CD4-positive, alpha-beta T cell (primary cell): ENCODE measurements at regions of chr11 and their contacts with region 1.

Region 1: DNA sequence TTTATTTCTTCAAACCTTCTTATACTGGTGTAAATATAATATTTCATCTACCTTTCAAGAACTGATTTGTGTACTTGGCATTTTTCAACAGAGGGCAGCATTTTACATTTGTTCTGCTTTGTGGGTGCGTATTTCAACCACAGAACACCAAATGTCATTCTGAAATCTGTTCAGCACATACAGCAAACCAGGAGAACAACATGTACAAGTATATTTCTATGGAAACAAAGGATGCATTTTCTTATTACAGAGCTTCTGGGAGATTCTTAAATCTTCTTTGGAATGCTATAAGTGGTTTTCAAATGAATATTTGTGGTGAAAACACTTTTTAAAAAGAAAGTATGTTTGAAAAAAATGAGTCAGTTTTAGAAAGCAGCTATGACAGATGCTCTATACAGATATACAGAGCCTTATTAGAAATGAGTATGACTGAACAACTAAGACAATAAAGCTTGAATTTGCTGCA is 946.0 kb downstream of the FAM181B start:
- DNase-seq: peak in 4 of 14 experiments; percentile 5 to 63 (median 60)
- ATAC-seq: peak; percentile 65
- H3K4me3 ChIP-seq: no peak overlapping the region
- H3K4me3 Mint-ChIP-seq: no peak overlapping the region
- H3K27ac ChIP-seq: no peak overlapping the region
- H3K27ac Mint-ChIP-seq: no peak overlapping the region
- H3K4me1 ChIP-seq: no peaks in the 10 kb centered on the region
- H3K4me1 Mint-ChIP-seq: peaks cover 9% of the 10 kb centered on the region
- H3K27me3 ChIP-seq: no peaks in the 10 kb centered on the region
- H3K27me3 Mint-ChIP-seq: no peaks in the 10 kb centered on the region
- CTCF ChIP-seq: peak; percentile 57

Region 2: GRCh38 chr11:81644239-81644840 is 143.3 kb before region 1 on chr11:
- CTCF ChIA-PET with region 1: no interaction called
- POLR2A ChIA-PET with region 1: no interaction called
- intact Hi-C with region 1: loop called in 1 of 2 experiments (anchors 5 kb)
- DNase-seq: peak in 3 of 14 experiments; percentile 43 to 48 (median 46)
- ATAC-seq: peak; percentile 66
- H3K4me3 ChIP-seq: no peak overlapping the region
- H3K4me3 Mint-ChIP-seq: no peak overlapping the region
- H3K27ac ChIP-seq: no peak overlapping the region
- H3K27ac Mint-ChIP-seq: no peak overlapping the region
- H3K4me1 ChIP-seq: no peaks in the 10 kb centered on the region
- H3K4me1 Mint-ChIP-seq: no peaks in the 10 kb centered on the region
- H3K27me3 ChIP-seq: peaks cover 0 to 3% of the 10 kb centered on the region in 2 experiments
- H3K27me3 Mint-ChIP-seq: peaks cover 21% of the 10 kb centered on the region
- CTCF ChIP-seq: peak; percentile 80

Region 3: DNA sequence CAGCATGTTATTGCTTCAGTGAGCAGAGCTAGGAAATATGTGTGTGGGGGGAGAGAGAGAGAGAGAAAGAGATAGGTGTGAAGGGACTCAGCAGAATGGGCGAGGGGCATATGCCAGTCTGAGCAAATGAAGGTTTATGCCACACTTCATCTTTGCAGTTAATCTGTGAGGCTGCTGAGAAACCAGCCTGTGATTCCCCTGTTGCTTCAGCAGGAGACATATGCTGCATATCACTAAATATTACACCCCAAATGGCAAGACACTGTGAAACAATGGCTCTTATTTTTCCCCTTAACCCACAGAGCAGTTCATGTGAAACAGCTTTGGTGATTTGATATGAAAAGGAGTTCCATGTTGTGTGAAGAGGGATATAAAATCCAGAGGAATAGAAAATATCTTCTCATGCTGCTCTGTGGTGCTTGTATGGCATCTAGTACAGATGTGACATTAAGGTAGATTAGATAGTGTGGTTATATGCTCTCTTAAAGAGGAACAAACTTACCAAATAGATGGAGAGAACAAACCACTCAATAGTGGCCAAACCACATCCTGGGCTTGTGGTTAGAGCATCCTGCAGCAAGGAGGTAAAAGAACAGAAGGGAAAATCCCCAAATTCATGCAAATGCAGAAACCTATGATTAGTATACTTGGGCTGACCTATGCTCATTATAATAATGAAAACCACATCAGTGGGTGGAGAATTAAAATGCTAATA is 81.9 kb after region 1 on chr11:
- CTCF ChIA-PET with region 1: no interaction called
- POLR2A ChIA-PET with region 1: no interaction called
- intact Hi-C with region 1: loop called in 1 of 2 experiments (anchors 5 kb)
- DNase-seq: peak; percentile 46 to 96 (median 66)
- ATAC-seq: peak; percentile 84
- H3K4me3 ChIP-seq: peak overlapping the region; percentile 40
- H3K4me3 Mint-ChIP-seq: peak overlapping the region; percentile 73
- H3K27ac ChIP-seq: peak overlapping the region; percentile 23 to 64
- H3K27ac Mint-ChIP-seq: peak overlapping the region; percentile 95
- H3K4me1 ChIP-seq: peaks cover 14% of the 10 kb centered on the region
- H3K4me1 Mint-ChIP-seq: peaks cover 53% of the 10 kb centered on the region
- H3K27me3 ChIP-seq: no peaks in the 10 kb centered on the region
- H3K27me3 Mint-ChIP-seq: no peaks in the 10 kb centered on the region
- CTCF ChIP-seq: no peak

Region 4: GRCh38 chr11:81963018-81963417 is 175.4 kb after region 1 on chr11:
- CTCF ChIA-PET with region 1: no interaction called
- POLR2A ChIA-PET with region 1: no interaction called
- intact Hi-C with region 1: loop called (anchors 5 kb)
- DNase-seq: peak in 3 of 14 experiments; percentile 23 to 37 (median 23)
- ATAC-seq: no peak
- H3K4me3 ChIP-seq: no peak overlapping the region
- H3K4me3 Mint-ChIP-seq: no peak overlapping the region
- H3K27ac ChIP-seq: no peak overlapping the region
- H3K27ac Mint-ChIP-seq: no peak overlapping the region
- H3K4me1 ChIP-seq: no peaks in the 10 kb centered on the region
- H3K4me1 Mint-ChIP-seq: peaks cover 17% of the 10 kb centered on the region
- H3K27me3 ChIP-seq: no peaks in the 10 kb centered on the region
- H3K27me3 Mint-ChIP-seq: no peaks in the 10 kb centered on the region
- CTCF ChIP-seq: peak; percentile 51

Region 5: DNA sequence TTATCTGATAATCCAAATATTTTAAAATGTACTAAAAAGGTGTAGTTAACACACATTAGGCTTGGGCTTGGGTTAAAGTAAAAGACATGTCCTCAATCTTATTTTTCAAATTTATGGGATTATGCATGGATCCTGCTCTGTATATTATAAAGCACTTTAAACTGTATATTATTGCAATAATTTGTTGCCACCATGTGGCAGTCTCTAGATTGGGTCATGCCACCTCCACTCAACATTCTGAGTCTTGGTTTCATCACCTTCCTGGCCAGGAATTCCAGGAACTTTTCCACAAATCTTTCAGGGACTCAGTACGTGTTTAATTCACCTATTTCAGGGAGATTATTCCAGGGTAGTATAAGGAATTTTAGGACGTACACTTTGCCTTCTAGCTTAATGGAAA is 250.5 kb after region 1 on chr11:
- CTCF ChIA-PET with region 1: no interaction called
- POLR2A ChIA-PET with region 1: no interaction called
- intact Hi-C with region 1: loop called in 1 of 2 experiments (anchors 5 kb)
- DNase-seq: no peak
- ATAC-seq: no peak
- H3K4me3 ChIP-seq: no peak overlapping the region
- H3K4me3 Mint-ChIP-seq: no peak overlapping the region
- H3K27ac ChIP-seq: no peak overlapping the region
- H3K27ac Mint-ChIP-seq: no peak overlapping the region
- H3K4me1 ChIP-seq: no peaks in the 10 kb centered on the region
- H3K4me1 Mint-ChIP-seq: no peaks in the 10 kb centered on the region
- H3K27me3 ChIP-seq: no peaks in the 10 kb centered on the region
- H3K27me3 Mint-ChIP-seq: no peaks in the 10 kb centered on the region
- CTCF ChIP-seq: no peak

Region 6: DNA sequence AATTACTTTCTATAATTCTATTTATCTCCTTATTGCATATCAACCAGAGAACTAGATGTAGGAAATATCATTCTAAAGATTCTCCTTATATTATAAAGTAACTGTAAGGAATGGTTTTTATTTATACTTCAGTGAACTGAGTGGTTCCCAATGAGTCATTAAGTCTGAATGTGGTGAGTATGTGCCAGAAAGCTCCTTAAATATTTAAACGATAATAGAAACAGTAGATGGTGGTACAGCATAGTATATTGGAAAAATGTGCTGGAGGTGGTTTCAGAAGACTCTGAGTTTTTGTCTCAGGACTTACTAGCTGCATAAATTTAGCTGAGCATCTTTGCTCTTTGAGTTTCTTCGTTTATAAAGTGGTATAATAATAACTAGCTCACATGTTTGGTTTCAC is 292.5 kb after region 1 on chr11:
- CTCF ChIA-PET with region 1: no interaction called
- POLR2A ChIA-PET with region 1: no interaction called
- intact Hi-C with region 1: no loop called
- DNase-seq: no peak
- ATAC-seq: no peak
- H3K4me3 ChIP-seq: no peak overlapping the region
- H3K4me3 Mint-ChIP-seq: no peak overlapping the region
- H3K27ac ChIP-seq: no peak overlapping the region
- H3K27ac Mint-ChIP-seq: no peak overlapping the region
- H3K4me1 ChIP-seq: no peaks in the 10 kb centered on the region
- H3K4me1 Mint-ChIP-seq: no peaks in the 10 kb centered on the region
- H3K27me3 ChIP-seq: no peaks in the 10 kb centered on the region
- H3K27me3 Mint-ChIP-seq: peaks cover 4% of the 10 kb centered on the region
- CTCF ChIP-seq: no peak

Region 7: GRCh38 chr11:82229341-82229740 is 441.7 kb after region 1 on chr11:
- CTCF ChIA-PET with region 1: no interaction called
- POLR2A ChIA-PET with region 1: no interaction called
- intact Hi-C with region 1: loop called (anchors 1 to 5 kb)
- DNase-seq: peak in 3 of 14 experiments; percentile 25 to 38 (median 28)
- ATAC-seq: no peak
- H3K4me3 ChIP-seq: no peak overlapping the region
- H3K4me3 Mint-ChIP-seq: no peak overlapping the region
- H3K27ac ChIP-seq: no peak overlapping the region
- H3K27ac Mint-ChIP-seq: no peak overlapping the region
- H3K4me1 ChIP-seq: no peaks in the 10 kb centered on the region
- H3K4me1 Mint-ChIP-seq: no peaks in the 10 kb centered on the region
- H3K27me3 ChIP-seq: no peaks in the 10 kb centered on the region
- H3K27me3 Mint-ChIP-seq: no peaks in the 10 kb centered on the region
- CTCF ChIP-seq: no peak

Region 8: DNA sequence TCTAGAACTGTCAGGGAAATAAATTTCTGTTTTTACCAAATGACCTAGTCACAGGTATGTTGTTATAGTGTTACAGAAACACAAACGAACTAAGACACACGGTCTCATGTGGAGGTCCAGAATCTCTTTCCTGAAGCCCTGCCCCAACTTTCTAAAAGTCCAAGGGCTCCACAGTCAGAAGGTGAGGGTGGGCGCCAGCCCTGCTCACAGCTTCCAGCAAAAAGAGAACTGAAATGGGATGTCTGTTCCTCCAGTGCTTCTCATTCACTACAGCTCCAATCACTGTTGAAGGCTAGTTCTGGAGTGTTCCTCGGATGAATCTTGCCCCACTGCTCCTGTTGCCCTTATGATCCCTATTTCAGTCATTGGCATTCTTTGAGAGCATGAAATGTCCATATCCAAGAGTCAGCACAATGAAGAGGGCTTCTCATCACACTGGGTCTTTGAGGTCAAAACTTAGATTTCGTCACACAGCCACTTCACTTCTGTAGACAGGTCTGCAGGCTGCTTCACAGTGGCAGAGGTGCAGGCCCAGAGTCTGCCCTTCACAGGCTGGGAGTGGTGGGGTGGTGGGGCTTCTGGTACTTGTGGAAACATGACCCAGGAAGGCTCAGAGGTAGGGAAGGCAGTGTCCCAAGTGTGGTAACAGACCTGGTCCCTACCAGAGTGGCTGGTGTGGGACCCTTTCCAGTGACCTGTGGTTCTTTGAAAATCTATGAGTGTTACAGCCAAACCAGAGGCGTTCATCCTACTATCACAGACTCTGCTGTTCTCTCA is 911.1 kb after region 1 on chr11:
- CTCF ChIA-PET with region 1: no interaction called
- POLR2A ChIA-PET with region 1: no interaction called
- intact Hi-C with region 1: loop called in 1 of 2 experiments (anchors 2 kb)
- DNase-seq: no peak
- ATAC-seq: no peak
- H3K4me3 ChIP-seq: no peak overlapping the region
- H3K4me3 Mint-ChIP-seq: no peak overlapping the region
- H3K27ac ChIP-seq: no peak overlapping the region
- H3K27ac Mint-ChIP-seq: no peak overlapping the region
- H3K4me1 ChIP-seq: no peaks in the 10 kb centered on the region
- H3K4me1 Mint-ChIP-seq: no peaks in the 10 kb centered on the region
- H3K27me3 ChIP-seq: peaks cover 0 to 4% of the 10 kb centered on the region in 2 experiments
- H3K27me3 Mint-ChIP-seq: peaks cover 8% of the 10 kb centered on the region
- CTCF ChIP-seq: no peak